OCI-LY7 (cell line): ENCODE measurements at regions of chr1 and their contacts with region 1.

Region 1: DNA sequence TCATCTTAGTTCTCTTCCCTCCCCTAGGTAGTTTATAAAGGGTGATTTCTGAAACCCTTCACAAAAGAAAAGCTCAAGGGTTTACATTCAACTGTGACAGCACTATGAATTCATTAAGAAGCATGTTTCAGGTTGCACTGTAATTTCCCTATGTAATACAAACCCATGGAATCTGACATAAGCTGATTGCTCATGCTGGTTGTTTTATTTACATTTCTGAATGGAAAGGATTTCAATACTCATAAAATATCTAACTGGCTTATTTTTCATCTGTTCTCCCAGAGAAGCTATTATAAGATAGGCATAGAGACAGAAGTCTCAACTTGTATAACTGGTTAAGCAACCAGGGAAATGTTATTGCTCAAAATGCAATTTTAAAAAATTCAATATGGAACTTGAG is 20.5 kb downstream of the WNT2B start:
- DNase-seq: no peak
- H3K4me3 ChIP-seq: no peak overlapping the region
- H3K27ac ChIP-seq: no peak overlapping the region
- H3K4me1 ChIP-seq: no peaks in the 10 kb centered on the region
- CTCF ChIP-seq: no peak

Region 2: DNA sequence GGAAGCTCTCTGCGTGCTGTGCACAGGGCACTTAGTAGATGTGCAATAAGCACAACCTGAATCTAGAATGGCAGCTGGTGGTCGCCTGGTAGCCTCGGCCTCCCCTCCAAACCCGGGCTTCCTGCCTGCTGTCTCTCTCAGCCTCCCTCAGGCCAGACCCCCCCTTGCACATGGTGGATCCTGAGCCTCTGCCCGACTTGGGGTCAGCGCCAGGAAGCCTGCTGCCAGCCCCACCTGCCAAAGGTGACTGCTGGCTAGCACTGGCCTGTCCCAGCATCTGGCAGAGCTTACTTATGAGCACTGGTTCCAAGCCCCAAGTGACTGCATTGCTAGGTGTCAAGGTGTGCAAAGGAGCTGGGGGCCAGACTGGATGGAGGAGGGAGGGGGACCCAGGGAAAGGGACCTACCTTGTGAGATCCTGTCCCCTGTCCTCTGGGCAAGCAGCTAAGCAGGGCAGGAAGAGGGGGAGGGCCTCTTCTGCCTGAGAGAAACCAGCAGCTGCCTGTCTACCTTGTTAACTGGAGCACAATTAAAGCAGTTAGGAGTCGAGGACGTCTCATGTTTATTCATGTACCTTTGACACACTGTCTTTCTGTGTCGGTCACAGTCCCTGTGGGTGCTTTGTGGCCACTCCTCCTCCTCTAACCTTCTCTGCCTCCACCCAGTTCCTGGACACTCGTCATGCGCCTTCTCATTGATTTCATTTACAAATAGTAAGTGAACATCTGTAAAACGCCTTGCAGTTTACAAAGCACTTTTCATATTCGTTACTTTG is 672.7 kb before region 1 on chr1:
- CTCF ChIA-PET with region 1: no interaction called
- POLR2A ChIA-PET with region 1: no interaction called
- intact Hi-C with region 1: no loop called
- DNase-seq: no peak
- H3K4me3 ChIP-seq: no peak overlapping the region
- H3K27ac ChIP-seq: no peak overlapping the region
- H3K4me1 ChIP-seq: no peaks in the 10 kb centered on the region
- CTCF ChIP-seq: no peak

Region 3: DNA sequence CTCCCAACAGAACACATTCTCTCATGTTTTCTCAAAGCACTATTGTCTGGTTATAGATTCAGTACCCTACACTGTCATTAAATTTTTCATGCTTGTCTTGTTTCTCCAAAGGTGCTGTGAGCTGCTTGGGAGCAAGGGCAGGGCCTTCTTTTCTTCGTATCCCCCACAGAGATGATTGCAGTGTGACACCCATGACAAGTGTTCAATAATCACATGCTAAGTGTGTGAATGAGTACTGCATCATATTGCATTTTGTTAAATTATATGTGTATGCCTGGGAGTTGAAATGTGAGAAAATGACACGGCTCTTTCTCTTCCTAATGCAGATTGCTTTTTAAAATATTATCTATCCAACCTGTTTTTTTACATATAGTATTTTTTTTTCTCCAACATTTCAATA is 803.8 kb after region 1 on chr1:
- CTCF ChIA-PET with region 1: no interaction called
- POLR2A ChIA-PET with region 1: interaction called, 13 read pairs
- intact Hi-C with region 1: no loop called
- DNase-seq: no peak
- H3K4me3 ChIP-seq: no peak overlapping the region
- H3K27ac ChIP-seq: no peak overlapping the region
- H3K4me1 ChIP-seq: no peaks in the 10 kb centered on the region
- CTCF ChIP-seq: no peak